SK-N-SH (cell line): ENCODE measurements at regions of chr11 and their contacts with region 1.

Region 1: DNA sequence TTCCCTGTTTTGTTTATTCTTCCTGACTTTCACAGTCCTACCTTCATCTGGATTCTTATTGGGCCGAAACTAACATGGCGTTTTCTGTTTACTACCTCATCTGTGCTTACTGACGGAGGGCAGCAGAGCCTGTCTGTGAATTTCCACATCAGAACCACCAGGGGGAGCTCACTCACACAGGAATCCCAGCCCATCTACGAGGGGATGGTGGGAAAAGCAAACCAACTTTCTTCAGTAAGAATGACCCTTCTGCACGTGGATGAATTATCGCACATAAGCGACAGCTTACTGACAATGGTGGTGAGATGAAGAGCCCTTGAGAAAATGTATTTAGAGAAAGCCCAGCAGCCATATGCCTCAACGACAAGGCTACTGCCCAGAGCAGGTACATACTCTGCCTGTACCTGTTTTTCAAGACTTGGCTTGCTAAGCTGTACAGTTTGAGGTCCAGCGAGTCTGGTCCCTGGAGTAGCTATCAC is 42.5 kb downstream of the LARGE2 start:
- DNase-seq: peak; percentile 81
- H3K4me3 ChIP-seq: no peak overlapping the region; a peak in 1 of 4 replicates
- H3K27ac ChIP-seq: peak overlapping the region in 1 of 2 experiments; percentile 2; a peak in 1 of 4 replicates
- H3K4me1 ChIP-seq: no peaks in the 10 kb centered on the region; a peak in 1 of 4 replicates
- H3K27me3 ChIP-seq: no peaks in the 10 kb centered on the region
- CTCF ChIP-seq: peak; percentile 96
- EP300 ChIP-seq: no peak
- RAD21 ChIP-seq: peak; percentile 91

Region 2: GRCh38 chr11:45745065-45745811 is 219.7 kb before region 1 on chr11:
- CTCF ChIA-PET with region 1: no interaction called
- POLR2A ChIA-PET with region 1: no interaction called
- DNase-seq: no peak
- H3K4me3 ChIP-seq: no peak overlapping the region
- H3K27ac ChIP-seq: no peak overlapping the region
- H3K4me1 ChIP-seq: no peaks in the 10 kb centered on the region; a peak in 1 of 4 replicates
- H3K27me3 ChIP-seq: no peaks in the 10 kb centered on the region; the same call in 1 of the 2 replicates
- CTCF ChIP-seq: no peak
- EP300 ChIP-seq: no peak
- RAD21 ChIP-seq: no peak

Region 3: DNA sequence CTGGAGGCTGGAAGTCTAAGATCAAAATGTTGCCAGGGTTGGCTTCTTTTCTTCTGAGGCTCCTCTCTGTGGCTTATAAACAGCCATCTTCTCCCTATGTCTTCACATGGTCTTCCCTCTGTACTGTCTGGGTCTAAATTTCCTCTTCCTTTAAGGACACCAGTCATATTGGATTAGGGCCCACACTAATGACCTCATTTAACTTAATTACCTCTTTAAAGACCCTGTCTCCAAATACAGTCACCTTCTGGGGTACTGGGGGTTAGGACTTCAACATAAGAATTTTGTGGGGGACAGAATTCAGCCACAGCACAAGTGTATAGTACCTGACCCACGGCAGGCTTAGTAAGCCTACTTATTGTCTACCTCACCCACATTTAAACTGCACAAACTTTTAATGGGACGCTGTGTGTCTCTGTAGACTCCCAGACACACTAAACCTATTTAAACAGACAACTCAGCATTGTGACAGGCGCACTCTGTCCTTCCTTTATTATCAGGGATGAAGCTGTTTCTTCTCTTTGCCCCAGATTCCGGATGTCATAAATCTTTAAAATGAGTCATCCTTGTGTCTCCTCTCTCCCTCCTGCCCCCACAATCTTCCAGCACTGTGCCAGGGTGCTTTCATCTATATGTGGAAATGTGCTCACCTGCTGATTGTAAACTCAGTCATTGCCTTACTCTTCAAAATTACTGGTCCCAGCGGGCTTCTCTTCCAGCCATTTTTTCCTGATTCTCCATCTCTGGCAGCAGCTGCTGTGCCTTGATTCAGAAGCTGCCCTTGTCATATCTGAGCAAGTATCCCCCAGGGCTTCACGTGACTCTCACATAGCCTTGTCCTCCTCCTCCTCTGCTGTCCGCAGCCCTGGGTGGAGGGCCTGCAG is 84.9 kb before region 1 on chr11:
- CTCF ChIA-PET with region 1: interaction called, 12 read pairs
- POLR2A ChIA-PET with region 1: no interaction called
- DNase-seq: no peak
- H3K4me3 ChIP-seq: no peak overlapping the region
- H3K27ac ChIP-seq: peak overlapping the region; percentile 74 to 97
- H3K4me1 ChIP-seq: peaks cover 24 to 47% of the 10 kb centered on the region in 2 experiments
- H3K27me3 ChIP-seq: no peaks in the 10 kb centered on the region
- CTCF ChIP-seq: no peak
- EP300 ChIP-seq: peak; percentile 43 to 47; a peak in 3 of 4 replicates
- RAD21 ChIP-seq: 0 out of 2 replicates have a peak, but pooled peaks have one; percentile 4

Region 4: DNA sequence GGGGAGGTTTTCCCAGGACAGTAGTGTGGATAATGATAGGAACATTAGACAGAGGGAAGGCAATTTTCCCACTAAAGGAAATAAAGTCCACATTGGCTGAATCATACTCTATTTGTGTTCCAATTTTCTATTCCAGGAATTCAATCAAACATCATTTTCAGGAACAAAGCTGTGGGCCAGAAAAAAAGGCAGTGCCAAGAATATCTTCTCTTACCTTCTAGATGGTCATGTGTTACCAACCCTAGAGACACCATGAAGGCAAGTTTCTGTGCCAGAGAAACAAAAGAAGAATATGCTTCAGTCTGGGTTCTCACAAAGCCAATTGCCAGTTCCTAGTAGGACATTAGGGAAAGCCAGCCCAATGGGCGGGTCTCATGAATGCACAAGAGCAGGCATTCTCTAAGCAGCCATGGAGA is 14.9 kb before region 1 on chr11:
- CTCF ChIA-PET with region 1: interaction called, 36 read pairs
- POLR2A ChIA-PET with region 1: no interaction called
- DNase-seq: no peak
- H3K4me3 ChIP-seq: no peak overlapping the region
- H3K27ac ChIP-seq: no peak overlapping the region
- H3K4me1 ChIP-seq: no peaks in the 10 kb centered on the region
- H3K27me3 ChIP-seq: no peaks in the 10 kb centered on the region
- CTCF ChIP-seq: no peak
- EP300 ChIP-seq: no peak
- RAD21 ChIP-seq: no peak

Region 5: DNA sequence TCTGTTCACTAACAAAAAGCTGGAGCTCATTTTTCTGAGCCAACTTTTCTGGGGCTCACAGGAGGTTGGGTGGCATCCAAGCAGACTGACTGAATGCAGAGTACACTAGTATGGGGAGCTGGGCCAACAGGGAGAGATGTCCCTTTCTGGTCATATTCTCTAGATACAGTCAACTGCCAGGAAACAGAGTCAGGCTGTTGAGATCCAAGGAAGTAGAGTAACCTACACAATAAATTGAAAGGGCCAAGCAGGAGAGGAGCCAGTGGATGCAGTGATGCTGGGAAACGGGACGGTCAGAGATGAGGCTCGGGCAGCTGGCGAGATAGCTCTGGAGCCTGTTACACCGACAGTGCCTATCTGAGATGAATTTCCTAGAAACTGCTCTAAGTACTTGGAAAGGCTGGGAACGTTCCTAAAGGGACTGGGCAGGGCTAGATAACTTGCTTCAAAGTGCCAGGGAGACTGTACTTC is 28.6 kb after region 1 on chr11:
- CTCF ChIA-PET with region 1: interaction called, 33 read pairs
- POLR2A ChIA-PET with region 1: no interaction called
- DNase-seq: no peak
- H3K4me3 ChIP-seq: no peak overlapping the region
- H3K27ac ChIP-seq: peak overlapping the region; percentile 36 to 46; a peak in 3 of 4 replicates
- H3K4me1 ChIP-seq: peaks cover 16 to 24% of the 10 kb centered on the region in 2 experiments; a peak in 3 of 4 replicates
- H3K27me3 ChIP-seq: no peaks in the 10 kb centered on the region
- CTCF ChIP-seq: no peak
- EP300 ChIP-seq: no peak
- RAD21 ChIP-seq: no peak

Region 6: GRCh38 chr11:46006418-46007070 is 41.6 kb after region 1 on chr11:
- CTCF ChIA-PET with region 1: interaction called, 93 read pairs
- POLR2A ChIA-PET with region 1: no interaction called
- DNase-seq: peak; percentile 65
- H3K4me3 ChIP-seq: no peak overlapping the region; a peak in 1 of 4 replicates
- H3K27ac ChIP-seq: no peak overlapping the region
- H3K4me1 ChIP-seq: peaks cover 0 to 27% of the 10 kb centered on the region in 2 experiments; a peak in 2 of 4 replicates
- H3K27me3 ChIP-seq: no peaks in the 10 kb centered on the region
- CTCF ChIP-seq: peak; percentile 86
- EP300 ChIP-seq: no peak
- RAD21 ChIP-seq: peak; percentile 94